ENCODE measurements at regions of chr11 and their contacts with region 1.

Region 1: DNA sequence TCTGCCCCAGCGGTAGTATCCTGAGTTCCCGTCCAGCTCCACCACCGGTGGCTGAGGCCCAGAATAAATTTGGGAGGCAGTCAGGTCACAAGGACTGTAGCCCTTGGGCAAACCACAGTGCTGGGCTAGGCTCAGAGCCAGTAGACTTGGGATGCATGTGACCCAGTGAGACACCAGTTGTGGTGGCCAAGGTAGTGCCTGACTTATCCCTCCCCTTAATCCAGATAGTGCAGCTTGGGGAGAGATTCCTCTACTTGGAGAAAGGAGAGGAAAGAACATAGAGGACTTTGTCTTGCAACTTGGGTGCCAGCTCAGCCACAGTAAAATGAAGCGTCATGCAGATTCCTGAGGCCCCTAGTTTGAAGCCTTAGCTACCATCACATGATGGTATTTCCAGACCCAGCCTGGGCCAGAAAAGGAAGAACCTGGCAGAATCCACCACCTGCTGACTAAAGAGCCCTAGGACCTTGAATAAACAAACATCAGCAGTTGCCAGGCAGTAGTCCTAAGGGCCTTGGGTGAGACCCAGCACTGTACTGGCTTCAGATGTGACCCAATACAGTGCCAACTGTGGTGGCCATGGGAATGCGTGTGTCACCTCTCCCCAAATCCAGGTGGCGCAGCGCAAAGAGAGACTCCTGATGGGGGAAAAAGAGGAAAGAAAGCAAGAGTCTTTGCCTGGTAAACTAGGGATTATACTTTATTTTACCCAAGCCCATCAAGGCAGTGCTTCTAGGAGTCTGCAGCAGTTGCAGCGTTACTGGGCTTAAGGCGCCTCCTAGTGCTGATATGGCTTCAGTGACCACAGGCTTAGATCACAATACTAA is 17.0 kb upstream of the DDX10 start:
- DNase-seq: peak; percentile 76
- H3K4me3 Mint-ChIP-seq: no peak overlapping the region
- H3K27ac Mint-ChIP-seq: no peak overlapping the region
- H3K4me1 Mint-ChIP-seq: no peaks in the 10 kb centered on the region
- H3K27me3 Mint-ChIP-seq: no peaks in the 10 kb centered on the region

Region 2: DNA sequence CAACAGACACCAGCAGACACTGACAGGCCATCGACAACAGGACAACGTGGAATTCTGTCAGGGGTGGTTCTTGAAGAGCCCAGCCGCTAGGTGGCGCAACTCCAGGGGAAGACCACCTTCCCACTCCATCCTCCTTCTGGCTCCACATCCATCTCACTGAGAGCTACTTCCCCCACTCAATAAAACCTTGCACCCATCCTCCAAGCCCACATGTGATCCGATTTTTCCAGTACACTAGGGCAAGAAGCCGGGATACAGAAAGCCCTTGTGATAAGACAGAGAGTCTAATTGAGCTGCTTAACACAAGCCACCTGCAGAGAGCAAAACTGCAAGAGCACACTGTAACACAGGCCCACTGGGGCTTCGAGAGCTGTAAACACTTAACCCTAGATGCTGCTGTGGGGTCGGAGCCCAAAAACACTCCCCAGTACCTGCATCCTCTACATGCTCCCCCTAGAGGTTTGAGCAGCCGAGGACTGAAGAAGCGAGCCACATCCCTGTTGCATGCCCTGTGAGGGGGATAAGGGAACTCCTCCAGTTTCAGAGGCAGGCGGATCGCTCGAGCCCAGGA is 731.2 kb before region 1 on chr11:
- CTCF ChIA-PET with region 1: interaction called, 4 read pairs
- POLR2A ChIA-PET with region 1: no interaction called
- intact Hi-C with region 1: loop called (anchors 5 kb)
- DNase-seq: peak; percentile 53
- H3K4me3 Mint-ChIP-seq: no peak overlapping the region
- H3K27ac Mint-ChIP-seq: no peak overlapping the region
- H3K4me1 Mint-ChIP-seq: no peaks in the 10 kb centered on the region
- H3K27me3 Mint-ChIP-seq: peaks cover 6% of the 10 kb centered on the region

Region 3: GRCh38 chr11:108340970-108341369 is 306.9 kb before region 1 on chr11:
- CTCF ChIA-PET with region 1: interaction called, 4 read pairs
- POLR2A ChIA-PET with region 1: no interaction called
- intact Hi-C with region 1: loop called (anchors 10 kb)
- DNase-seq: no peak
- H3K4me3 Mint-ChIP-seq: no peak overlapping the region
- H3K27ac Mint-ChIP-seq: no peak overlapping the region
- H3K4me1 Mint-ChIP-seq: peaks cover 27% of the 10 kb centered on the region
- H3K27me3 Mint-ChIP-seq: no peaks in the 10 kb centered on the region

Region 4: DNA sequence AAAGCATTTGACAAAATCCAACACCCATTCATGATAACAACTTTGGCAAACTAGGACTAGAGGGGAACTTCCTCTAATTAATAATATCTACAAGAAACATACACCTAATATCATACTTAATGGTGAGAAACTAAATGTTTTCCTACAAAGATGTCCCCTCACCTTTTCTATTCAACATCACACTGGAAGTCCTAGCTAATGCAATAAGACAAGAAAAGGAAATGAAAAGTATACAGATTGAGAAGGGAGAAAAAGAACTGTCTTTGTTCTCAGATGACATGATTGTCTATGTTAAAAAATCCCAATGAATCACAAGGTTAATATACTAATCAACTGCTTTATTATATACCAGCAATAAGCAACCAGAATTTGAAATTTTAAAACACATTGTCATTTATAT is 233.0 kb before region 1 on chr11:
- CTCF ChIA-PET with region 1: no interaction called
- POLR2A ChIA-PET with region 1: no interaction called
- intact Hi-C with region 1: loop called (anchors 1 kb)
- DNase-seq: no peak
- H3K4me3 Mint-ChIP-seq: no peak overlapping the region
- H3K27ac Mint-ChIP-seq: no peak overlapping the region
- H3K4me1 Mint-ChIP-seq: no peaks in the 10 kb centered on the region
- H3K27me3 Mint-ChIP-seq: no peaks in the 10 kb centered on the region

Region 5: GRCh38 chr11:108593214-108593922 is 54.5 kb before region 1 on chr11 and contains the start of gene EXPH5:
- CTCF ChIA-PET with region 1: no interaction called
- POLR2A ChIA-PET with region 1: no interaction called
- intact Hi-C with region 1: no loop called
- DNase-seq: peak; percentile 93
- H3K4me3 Mint-ChIP-seq: peak within 1 kb of the TSS; percentile 87
- H3K27ac Mint-ChIP-seq: peak within 1 kb of the TSS; percentile 68
- H3K4me1 Mint-ChIP-seq: peaks cover 17% of the 10 kb centered on the region
- H3K27me3 Mint-ChIP-seq: peaks cover 11% of the 10 kb centered on the region
- total RNA-seq, gene EXPH5: 1.4 to 1.8 TPM

Region 6: GRCh38 chr11:108853864-108854263 is 205.9 kb after region 1 on chr11:
- CTCF ChIA-PET with region 1: no interaction called
- POLR2A ChIA-PET with region 1: no interaction called
- intact Hi-C with region 1: no loop called
- DNase-seq: no peak
- H3K4me3 Mint-ChIP-seq: peak overlapping the region; percentile 18
- H3K27ac Mint-ChIP-seq: peak overlapping the region; percentile 4
- H3K4me1 Mint-ChIP-seq: peaks cover 25% of the 10 kb centered on the region
- H3K27me3 Mint-ChIP-seq: no peaks in the 10 kb centered on the region

Measured in activated CD4-positive, alpha-beta memory T cell treated with anti-CD3 and anti-CD28 coated beads for 36 hours (primary cell).